SK-N-SH (cell line): ENCODE measurements at regions of chr2 and their contacts with region 1.

Region 1: GRCh38 chr2:26922405-26923188 is 47.8 kb upstream of the MAPRE3 start:
- DNase-seq: peak; percentile 89
- H3K4me3 ChIP-seq: no peak overlapping the region
- H3K27ac ChIP-seq: peak overlapping the region in 1 of 2 experiments; percentile 22; a peak in 1 of 4 replicates
- H3K4me1 ChIP-seq: peaks cover 0 to 16% of the 10 kb centered on the region in 2 experiments; a peak in 2 of 4 replicates
- H3K27me3 ChIP-seq: peaks cover 9% of the 10 kb centered on the region; the same call in 1 of the 2 replicates
- CTCF ChIP-seq: peak; percentile 57
- EP300 ChIP-seq: no peak
- RAD21 ChIP-seq: peak; percentile 88

Region 2: DNA sequence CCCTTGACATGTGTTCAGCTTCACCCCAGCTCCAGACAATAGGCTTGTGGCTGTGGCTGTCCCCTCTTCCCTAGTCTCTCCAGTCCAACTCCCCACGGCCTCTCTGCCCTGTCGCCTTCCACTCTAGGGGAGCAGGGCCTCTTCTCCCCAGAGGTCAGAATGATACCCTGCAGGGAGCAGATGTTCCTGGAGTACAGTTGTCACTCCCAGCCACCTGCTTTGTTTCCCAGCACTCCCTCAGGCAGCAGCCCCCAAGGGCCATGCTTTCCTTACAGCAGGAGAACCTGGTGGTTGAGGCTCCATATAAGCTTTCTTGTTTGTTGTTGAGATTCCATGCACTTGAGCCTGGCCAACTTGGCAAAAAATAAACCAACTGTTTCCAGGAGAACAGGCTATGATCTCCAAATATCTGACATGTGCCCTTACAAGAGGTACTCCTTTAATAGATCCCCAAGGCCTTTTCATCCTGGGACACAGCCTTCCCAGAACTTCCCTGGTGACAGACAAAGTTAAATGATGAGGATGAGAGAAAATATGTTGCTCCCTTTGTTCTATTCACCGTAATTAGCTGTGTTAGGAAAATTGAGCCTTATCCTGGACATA is 29.6 kb before region 1 on chr2:
- CTCF ChIA-PET with region 1: interaction called, 14 read pairs
- POLR2A ChIA-PET with region 1: no interaction called
- DNase-seq: no peak
- H3K4me3 ChIP-seq: no peak overlapping the region
- H3K27ac ChIP-seq: peak overlapping the region in 1 of 2 experiments; percentile 6; a peak in 1 of 4 replicates
- H3K4me1 ChIP-seq: no peaks in the 10 kb centered on the region; a peak in 1 of 4 replicates
- H3K27me3 ChIP-seq: peaks cover 32% of the 10 kb centered on the region
- CTCF ChIP-seq: no peak
- EP300 ChIP-seq: no peak
- RAD21 ChIP-seq: no peak

Region 3: GRCh38 chr2:26911911-26912861 is 10.4 kb before region 1 on chr2:
- CTCF ChIA-PET with region 1: interaction called, 37 read pairs
- POLR2A ChIA-PET with region 1: interaction called, 20 read pairs
- DNase-seq: peak; percentile 83
- H3K4me3 ChIP-seq: peak overlapping the region in 1 of 2 experiments; percentile 19; a peak in 1 of 4 replicates
- H3K27ac ChIP-seq: peak overlapping the region in 1 of 2 experiments; percentile 98; a peak in 2 of 4 replicates
- H3K4me1 ChIP-seq: peaks cover 3 to 45% of the 10 kb centered on the region in 2 experiments; a peak in 3 of 4 replicates
- H3K27me3 ChIP-seq: peaks cover 32% of the 10 kb centered on the region; the same call in 1 of the 2 replicates
- CTCF ChIP-seq: no peak
- EP300 ChIP-seq: peak in 1 of 2 experiments; percentile 86; a peak in 2 of 4 replicates
- RAD21 ChIP-seq: peak; percentile 13; the same call in 1 of the 2 replicates

Region 4: GRCh38 chr2:26942543-26943295 is 20.1 kb after region 1 on chr2:
- CTCF ChIA-PET with region 1: interaction called, 89 read pairs
- POLR2A ChIA-PET with region 1: no interaction called
- DNase-seq: peak; percentile 90
- H3K4me3 ChIP-seq: no peak overlapping the region
- H3K27ac ChIP-seq: no peak overlapping the region
- H3K4me1 ChIP-seq: peaks cover 0 to 16% of the 10 kb centered on the region in 2 experiments; a peak in 1 of 4 replicates
- H3K27me3 ChIP-seq: peaks cover 38% of the 10 kb centered on the region; the same call in 1 of the 2 replicates
- CTCF ChIP-seq: peak; percentile 77
- EP300 ChIP-seq: no peak
- RAD21 ChIP-seq: peak; percentile 89

Region 5: DNA sequence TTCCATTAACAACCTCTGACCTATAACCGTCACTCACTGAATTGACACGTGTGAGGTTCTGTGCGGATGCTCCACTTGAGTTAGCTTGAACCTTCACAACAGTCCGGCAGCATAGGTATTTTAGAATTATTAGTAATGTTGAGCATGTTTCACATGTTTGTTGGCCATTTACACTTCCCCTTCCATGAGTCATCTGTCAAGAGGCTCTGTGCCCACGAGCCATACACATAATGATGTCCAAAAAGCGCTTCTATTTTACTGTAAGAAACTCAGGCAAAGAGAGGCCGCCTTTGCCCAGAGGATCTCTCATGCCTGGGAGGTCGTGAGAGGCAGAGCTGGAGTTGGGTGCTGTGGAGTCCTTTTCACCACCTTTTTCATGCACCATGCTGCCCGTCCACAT is 81.3 kb after region 1 on chr2:
- CTCF ChIA-PET with region 1: no interaction called
- POLR2A ChIA-PET with region 1: no interaction called
- DNase-seq: no peak
- H3K4me3 ChIP-seq: no peak overlapping the region
- H3K27ac ChIP-seq: no peak overlapping the region
- H3K4me1 ChIP-seq: 0 out of 4 replicates have a peak, but pooled peaks cover 0 to 7% of the 10 kb centered on the region in 2 experiments
- H3K27me3 ChIP-seq: no peaks in the 10 kb centered on the region
- CTCF ChIP-seq: no peak
- EP300 ChIP-seq: no peak
- RAD21 ChIP-seq: no peak